ENCODE measurements at regions of chr10 and their contacts with region 1.

Region 1: GRCh38 chr10:43436400-43437140 is at the start of gene ZNF487:
- DNase-seq: peak; percentile 95 to 96 (median 95)
- ATAC-seq: peak; percentile 98
- H3K4me3 ChIP-seq: peak within 1 kb of the TSS; percentile 54
- H3K27ac ChIP-seq: peak within 1 kb of the TSS; percentile 90
- H3K4me1 ChIP-seq: peaks cover 5 to 22% of the 10 kb centered on the region in 2 experiments; a peak in 3 of 5 replicates
- H3K27me3 ChIP-seq: no peaks in the 10 kb centered on the region
- CTCF ChIP-seq: peak; percentile 51 to 93 (median 76); a peak in 5 of 6 replicates
- EP300 ChIP-seq: no peak
- POLR2A ChIP-seq: peak; percentile 96
- RAD21 ChIP-seq: peak; percentile 86 to 87
- polyA plus RNA-seq, gene ZNF487: 6.1 to 6.5 TPM

Region 2: DNA sequence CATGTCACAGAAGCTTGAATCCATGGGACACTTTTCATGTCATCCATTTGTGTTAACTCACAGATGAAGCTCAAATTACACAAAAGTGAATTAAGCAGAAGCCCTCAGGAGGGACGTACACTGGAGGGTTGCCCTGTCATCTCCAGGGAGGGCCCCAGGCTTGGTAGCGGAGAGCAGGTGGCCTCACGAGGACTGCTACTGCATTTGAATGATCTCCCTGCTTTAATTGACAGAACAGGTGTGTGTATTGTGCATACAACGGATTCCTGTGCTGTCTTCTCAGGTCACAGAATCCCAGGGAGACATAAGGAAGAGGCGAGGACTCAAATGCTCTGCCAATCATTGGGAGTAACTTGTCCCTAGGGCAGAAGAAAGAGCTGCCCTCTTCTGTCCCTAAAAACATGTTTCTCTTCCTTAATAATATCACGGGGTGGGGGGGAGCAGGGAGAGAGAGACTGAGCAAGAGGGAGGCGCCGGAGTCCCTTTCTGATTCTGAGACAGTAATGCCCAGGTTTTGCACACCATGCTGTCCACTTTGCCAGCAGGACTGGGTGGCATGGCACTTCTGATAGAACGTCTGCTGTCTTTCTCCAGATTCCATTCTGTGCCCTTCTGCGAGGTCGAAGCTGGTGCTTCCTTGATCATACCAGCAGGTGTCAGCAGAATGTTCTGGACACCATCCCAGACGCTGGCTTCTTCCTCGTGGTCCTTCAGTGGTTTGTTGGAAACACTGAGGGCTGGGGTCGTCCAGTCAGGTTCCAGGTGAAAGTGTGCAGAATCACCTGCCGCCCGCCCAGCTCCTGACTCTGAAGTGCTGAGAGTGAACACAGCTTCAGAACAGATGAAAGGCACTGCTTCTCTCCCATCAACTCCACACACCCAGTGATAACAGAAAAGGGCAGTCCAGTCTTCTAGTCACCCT is 143.6 kb before region 1 on chr10:
- CTCF ChIA-PET with region 1: no interaction called
- POLR2A ChIA-PET with region 1: no interaction called
- in situ Hi-C with region 1: no loop called
- intact Hi-C with region 1: no loop called
- DNase-seq: peak; percentile 47 to 68 (median 54)
- ATAC-seq: peak; percentile 91
- H3K4me3 ChIP-seq: no peak overlapping the region
- H3K27ac ChIP-seq: no peak overlapping the region
- H3K4me1 ChIP-seq: peaks cover 0 to under 1% of the 10 kb centered on the region in 2 experiments; a peak in 1 of 5 replicates
- H3K27me3 ChIP-seq: peaks cover 2 to 32% of the 10 kb centered on the region in 2 experiments; a peak in 4 of 5 replicates
- CTCF ChIP-seq: peak; percentile 76 to 87 (median 84)
- EP300 ChIP-seq: no peak
- POLR2A ChIP-seq: no peak
- RAD21 ChIP-seq: peak; percentile 85 to 93

Region 3: DNA sequence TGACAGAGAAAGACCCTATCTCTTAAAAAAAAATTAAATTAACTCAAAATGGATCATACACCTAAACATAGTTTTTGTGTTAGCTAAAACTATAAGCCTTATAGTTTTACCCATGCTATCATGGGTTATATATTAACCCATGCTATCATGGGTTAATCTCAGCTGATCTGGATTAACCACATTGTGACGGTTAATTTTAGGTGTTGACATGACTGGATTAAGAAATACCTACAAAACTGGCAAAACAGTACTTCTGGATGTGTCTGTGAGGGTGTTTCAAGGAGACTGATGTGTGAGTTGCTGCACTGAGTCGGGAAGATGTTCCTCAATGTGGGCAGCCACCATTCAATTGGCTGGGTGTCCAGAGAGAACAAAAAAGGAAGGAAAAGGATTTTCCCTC is 109.4 kb before region 1 on chr10:
- CTCF ChIA-PET with region 1: no interaction called
- POLR2A ChIA-PET with region 1: no interaction called
- in situ Hi-C with region 1: no loop called
- intact Hi-C with region 1: no loop called
- DNase-seq: no peak
- ATAC-seq: no peak
- H3K4me3 ChIP-seq: no peak overlapping the region
- H3K27ac ChIP-seq: no peak overlapping the region
- H3K4me1 ChIP-seq: peaks cover 4 to 9% of the 10 kb centered on the region in 2 experiments; a peak in 1 of 5 replicates
- H3K27me3 ChIP-seq: peaks cover 53 to 72% of the 10 kb centered on the region in 2 experiments
- CTCF ChIP-seq: no peak
- EP300 ChIP-seq: no peak
- POLR2A ChIP-seq: no peak
- RAD21 ChIP-seq: no peak

Region 4: GRCh38 chr10:43407576-43408330 is 28.8 kb before region 1 on chr10:
- CTCF ChIA-PET with region 1: interaction called, 3 read pairs
- POLR2A ChIA-PET with region 1: interaction called, 16 read pairs
- in situ Hi-C with region 1: no loop called
- intact Hi-C with region 1: loop called (anchors 1 kb)
- DNase-seq: peak; percentile 70 to 97 (median 82)
- ATAC-seq: peak; percentile 69
- H3K4me3 ChIP-seq: peak overlapping the region; percentile 82
- H3K27ac ChIP-seq: peak overlapping the region; percentile 91
- H3K4me1 ChIP-seq: peaks cover 22 to 50% of the 10 kb centered on the region in 2 experiments; a peak in 4 of 5 replicates
- H3K27me3 ChIP-seq: no peaks in the 10 kb centered on the region
- CTCF ChIP-seq: peak; percentile 49 to 69 (median 52)
- EP300 ChIP-seq: peak; percentile 73
- POLR2A ChIP-seq: peak; percentile 99
- RAD21 ChIP-seq: peak in 1 of 2 experiments; percentile 63; a peak in 3 of 4 replicates

Region 5: DNA sequence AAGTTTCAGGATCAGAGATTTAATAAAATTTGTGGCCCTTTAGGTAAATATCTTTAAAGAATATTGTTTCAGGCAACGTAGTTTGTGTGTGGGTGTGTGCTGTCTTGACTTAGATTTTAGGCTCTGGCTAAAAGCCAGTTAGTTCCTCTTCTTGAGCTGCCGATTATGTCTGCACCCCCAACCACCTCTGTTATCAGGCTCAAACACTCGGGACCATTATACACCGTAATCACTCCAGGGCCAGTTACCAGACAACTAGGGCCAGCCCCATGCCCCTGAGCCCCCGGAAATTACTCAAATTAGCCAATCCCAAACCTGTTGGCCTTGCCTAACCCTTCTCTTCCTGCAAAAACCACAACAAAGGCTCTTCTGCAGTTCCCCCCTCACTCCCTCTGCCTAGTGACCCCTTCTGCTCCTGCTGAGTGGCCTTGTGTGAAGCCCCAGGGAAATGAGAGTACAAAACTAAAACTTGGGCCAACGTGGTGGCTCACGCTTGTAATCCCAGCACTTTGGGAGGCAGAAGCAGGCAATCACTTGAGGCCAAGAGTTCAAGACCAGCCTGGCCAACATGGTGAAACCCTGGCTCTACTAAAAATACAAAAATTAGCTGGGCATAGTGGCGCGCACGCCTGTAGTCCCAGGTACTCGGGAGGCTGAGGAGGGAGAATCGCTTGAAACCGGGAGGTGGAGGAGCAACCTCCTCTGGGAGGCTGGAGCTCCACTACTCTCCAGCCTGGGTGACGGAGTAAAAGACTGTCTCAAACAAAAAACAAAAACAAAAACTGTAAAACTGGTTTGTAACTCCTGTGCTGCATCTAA is 18.4 kb before region 1 on chr10:
- CTCF ChIA-PET with region 1: no interaction called
- POLR2A ChIA-PET with region 1: interaction called, 8 read pairs
- in situ Hi-C with region 1: no loop called
- intact Hi-C with region 1: loop called (anchors 1 kb)
- DNase-seq: peak; percentile 97 to 100 (median 98)
- ATAC-seq: peak; percentile 83
- H3K4me3 ChIP-seq: no peak overlapping the region
- H3K27ac ChIP-seq: peak overlapping the region; percentile 91
- H3K4me1 ChIP-seq: peaks cover 45 to 67% of the 10 kb centered on the region in 2 experiments
- H3K27me3 ChIP-seq: no peaks in the 10 kb centered on the region
- CTCF ChIP-seq: no peak
- EP300 ChIP-seq: peak; percentile 100
- POLR2A ChIP-seq: peak; percentile 66
- RAD21 ChIP-seq: no peak; a peak in 3 of 4 replicates

Region 6: GRCh38 chr10:43453266-43453831 is 16.8 kb after region 1 on chr10:
- CTCF ChIA-PET with region 1: no interaction called
- POLR2A ChIA-PET with region 1: interaction called, 10 read pairs
- in situ Hi-C with region 1: no loop called
- intact Hi-C with region 1: no loop called
- DNase-seq: no peak
- ATAC-seq: no peak
- H3K4me3 ChIP-seq: no peak overlapping the region
- H3K27ac ChIP-seq: no peak overlapping the region
- H3K4me1 ChIP-seq: peaks cover 16 to 22% of the 10 kb centered on the region in 2 experiments; a peak in 4 of 5 replicates
- H3K27me3 ChIP-seq: no peaks in the 10 kb centered on the region
- CTCF ChIP-seq: no peak
- EP300 ChIP-seq: no peak
- POLR2A ChIP-seq: no peak
- RAD21 ChIP-seq: no peak

Region 7: DNA sequence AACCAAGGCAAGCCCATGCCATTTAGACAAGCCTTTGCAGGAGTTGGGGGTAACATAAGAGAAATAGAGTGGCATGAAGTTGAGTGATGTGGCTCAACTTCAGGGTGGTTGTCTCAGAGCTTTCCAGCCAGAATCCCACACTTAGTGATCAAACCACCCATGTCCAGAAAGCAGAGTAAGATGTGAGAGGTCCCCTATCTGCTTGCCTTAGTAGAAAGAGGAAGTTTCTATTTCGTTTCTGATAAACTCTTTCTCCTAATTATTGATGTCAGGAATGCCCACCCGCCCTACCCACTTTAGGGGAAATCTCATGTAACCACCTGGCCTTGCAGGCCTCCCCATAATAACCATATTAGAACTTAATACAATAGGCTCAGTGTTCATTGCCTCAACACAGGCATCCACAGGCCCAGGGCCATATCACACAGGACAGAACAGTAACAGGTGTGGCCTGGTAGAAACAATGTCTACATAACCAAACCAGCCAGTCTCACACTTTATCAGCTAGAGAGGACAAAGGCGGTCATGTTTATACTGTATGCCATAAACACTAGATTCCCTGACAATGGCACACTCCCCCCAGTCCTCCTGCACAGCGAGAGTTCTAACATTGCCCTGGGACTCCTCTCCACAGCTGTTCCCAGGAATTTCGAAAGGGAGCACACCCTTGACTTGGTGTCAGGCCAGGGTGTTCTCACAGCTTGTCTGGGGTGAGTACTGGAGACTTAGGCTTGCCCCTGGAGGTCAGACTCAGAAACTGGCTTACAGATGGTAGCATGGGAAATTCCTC is 583.9 kb after region 1 on chr10:
- CTCF ChIA-PET with region 1: no interaction called
- POLR2A ChIA-PET with region 1: no interaction called
- in situ Hi-C with region 1: no loop called
- intact Hi-C with region 1: no loop called
- DNase-seq: no peak
- ATAC-seq: no peak
- H3K4me3 ChIP-seq: no peak overlapping the region
- H3K27ac ChIP-seq: no peak overlapping the region
- H3K4me1 ChIP-seq: no peaks in the 10 kb centered on the region
- H3K27me3 ChIP-seq: peaks cover 0 to 8% of the 10 kb centered on the region in 2 experiments; a peak in 1 of 5 replicates
- CTCF ChIP-seq: no peak
- EP300 ChIP-seq: no peak
- POLR2A ChIP-seq: no peak
- RAD21 ChIP-seq: no peak

Measured in K562 (cell line).